ENCODE measurements at regions of chr4 and their contacts with region 1.

Region 1: GRCh38 chr4:145618932-145619638 is at the start of gene MMAA:
- DNase-seq: peak; percentile 97
- total RNA-seq, gene MMAA: 9.9 TPM

Region 2: DNA sequence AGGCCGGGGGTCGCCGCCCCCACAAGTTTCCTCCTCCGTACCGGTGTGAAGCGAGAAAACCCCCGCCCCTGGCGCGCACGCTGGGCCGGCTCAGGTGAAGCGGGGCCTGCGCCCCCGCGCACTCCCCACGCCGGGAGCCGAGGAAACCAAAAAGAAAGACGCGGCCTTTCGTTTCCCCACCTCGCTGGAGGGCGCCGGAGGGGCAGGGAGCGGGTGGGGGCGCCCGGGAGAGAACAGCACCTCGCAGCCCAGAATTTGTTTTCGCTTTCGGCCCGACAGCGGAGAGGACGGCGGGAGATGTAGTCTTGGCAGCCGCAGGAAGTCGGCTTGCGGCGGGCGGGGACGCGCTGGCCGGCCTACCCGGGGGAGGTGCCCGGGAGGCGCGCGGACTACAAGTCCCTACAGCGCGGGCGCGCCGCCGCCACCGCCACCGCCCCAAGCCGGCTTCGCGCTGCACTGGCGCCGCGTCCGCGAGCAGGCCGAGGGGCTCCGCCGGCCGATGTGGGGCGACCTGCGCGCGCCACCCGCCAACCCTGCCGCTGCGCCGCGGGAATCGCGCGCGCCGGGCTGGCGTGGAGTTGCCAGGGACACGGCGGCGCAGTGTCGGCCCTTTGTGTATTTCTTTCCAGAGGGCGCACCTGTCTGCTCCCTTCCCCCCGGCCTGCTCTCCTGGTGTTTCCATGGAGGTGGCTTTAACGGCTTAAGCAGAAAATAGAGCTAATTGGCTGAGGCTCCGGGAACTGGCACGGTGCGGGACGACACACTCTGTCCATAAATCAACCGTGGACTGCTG is 438.6 kb before region 1 on chr4 and contains the start of gene OTUD4:
- intact Hi-C with region 1: loop called (anchors 1 kb)
- DNase-seq: peak; percentile 99
- total RNA-seq, gene OTUD4: 26.7 TPM

Region 3: DNA sequence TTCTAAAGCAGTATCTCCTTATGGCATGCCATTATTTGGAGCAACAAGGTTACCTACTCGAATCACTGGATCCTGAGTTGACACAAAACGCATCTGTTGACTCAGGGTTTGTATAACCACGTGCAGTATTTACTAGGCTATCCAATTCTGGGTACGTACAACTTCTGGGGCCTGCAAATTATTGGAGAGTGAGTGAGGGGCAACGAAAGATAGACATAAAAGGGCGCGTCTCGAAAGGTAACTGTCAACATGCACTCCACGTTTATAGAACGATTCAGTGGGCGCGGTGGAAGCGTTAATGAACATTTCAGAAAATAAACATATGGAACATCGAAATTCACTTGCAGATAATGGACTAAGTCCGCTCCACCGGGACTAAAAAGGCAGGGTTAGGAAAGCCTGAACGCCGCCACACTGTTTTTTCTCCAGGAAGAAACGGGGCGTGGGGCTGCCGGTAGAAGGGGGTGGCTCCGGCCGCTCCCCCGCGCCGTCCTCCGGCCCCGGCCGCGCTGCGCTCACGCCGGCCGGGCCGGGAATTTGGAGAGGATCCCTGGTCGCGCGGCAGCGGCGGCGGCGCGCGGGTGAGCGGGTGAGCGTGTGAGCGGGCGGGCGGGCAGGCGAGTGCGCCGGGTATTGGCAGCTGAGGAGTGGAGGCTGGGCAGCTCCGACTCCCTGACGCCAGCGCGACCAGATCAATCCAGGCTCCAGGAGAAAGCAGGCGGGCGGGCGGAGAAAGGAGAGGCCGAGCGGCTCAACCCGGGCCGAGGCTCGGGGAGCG is 137.7 kb before region 1 on chr4 and contains the start of gene SMAD1:
- intact Hi-C with region 1: loop called (anchors 5 kb)
- DNase-seq: peak; percentile 91
- total RNA-seq, gene SMAD1: 10.8 TPM

Region 4: GRCh38 chr4:145545538-145546174 is 73.4 kb before region 1 on chr4:
- intact Hi-C with region 1: no loop called
- DNase-seq: no peak

Region 5: GRCh38 chr4:145808021-145808650 is 189.1 kb after region 1 on chr4:
- intact Hi-C with region 1: loop called (anchors 5 kb)
- DNase-seq: no peak

Region 6: GRCh38 chr4:145936142-145936996 is 317.3 kb after region 1 on chr4:
- intact Hi-C with region 1: loop called (anchors 2 kb)
- DNase-seq: peak; percentile 82

Region 7: DNA sequence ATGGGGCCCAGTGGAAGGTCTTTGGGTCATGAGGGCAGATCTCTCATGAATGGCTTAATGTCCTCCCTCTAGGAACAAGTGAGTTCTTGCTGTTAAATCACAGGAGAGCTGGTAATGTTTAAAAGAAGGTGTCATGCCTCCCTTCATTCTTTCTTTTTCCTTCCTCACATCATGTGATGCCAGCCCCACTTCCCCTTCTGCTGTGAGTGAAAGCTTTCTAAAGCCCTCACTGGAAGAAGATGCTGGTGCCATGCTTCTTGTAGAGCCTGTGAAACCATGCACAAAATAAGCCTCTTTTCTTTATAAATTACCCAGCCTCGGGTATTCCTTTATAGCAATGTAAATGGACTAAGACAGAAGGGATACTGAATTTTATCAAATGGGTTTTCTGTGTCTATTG is 385.6 kb after region 1 on chr4:
- intact Hi-C with region 1: no loop called
- DNase-seq: no peak

Measured in cardiac septum (tissue), 1 donor.